Tibial artery (tissue), 4 donors: ENCODE measurements at regions of chr2 and their contacts with region 1.

Region 1: GRCh38 chr2:165700531-165700930 is 93.5 kb downstream of the GALNT3 start:
- DNase-seq: no peak
- H3K4me3 ChIP-seq: no peak overlapping the region
- H3K27ac ChIP-seq: no peak overlapping the region
- H3K4me1 ChIP-seq: peaks cover 0 to 5% (median 4%) of the 10 kb centered on the region in 4 donors
- H3K27me3 ChIP-seq: no peaks in the 10 kb centered on the region
- CTCF ChIP-seq: no peak

Region 2: DNA sequence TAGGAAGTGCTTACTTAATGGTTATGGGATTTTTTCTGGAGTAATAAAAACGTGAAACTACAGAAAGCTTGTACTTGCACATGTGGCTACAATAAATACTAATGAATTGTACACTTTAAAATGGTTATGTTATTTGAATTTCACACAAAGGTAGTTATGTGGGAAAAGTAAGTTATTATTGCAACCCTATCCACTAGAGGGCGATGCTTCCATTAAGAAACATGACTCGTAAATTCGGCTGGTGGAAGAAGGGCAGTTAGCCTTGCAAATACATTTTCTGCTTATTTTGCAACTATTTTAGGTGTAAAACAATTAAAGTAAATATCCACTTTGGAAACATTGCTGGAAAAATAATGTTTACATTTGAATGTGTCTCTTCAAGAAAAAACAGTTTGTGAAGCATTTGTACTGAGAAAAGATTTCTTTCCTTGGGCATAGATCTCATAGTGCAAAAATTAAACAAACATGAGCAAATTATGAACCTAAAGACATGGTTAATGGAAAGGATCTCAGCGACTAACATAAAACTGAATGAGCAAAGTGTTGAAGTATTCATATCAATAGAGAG is 299.2 kb before region 1 on chr2:
- intact Hi-C with region 1: loop called (anchors 5 kb)
- DNase-seq: no peak
- H3K4me3 ChIP-seq: no peak overlapping the region
- H3K27ac ChIP-seq: no peak overlapping the region
- H3K4me1 ChIP-seq: peaks cover 0 to 6% (median 0%) of the 10 kb centered on the region in 4 donors
- H3K27me3 ChIP-seq: no peaks in the 10 kb centered on the region
- CTCF ChIP-seq: peak; percentile 71 to 78

Region 3: DNA sequence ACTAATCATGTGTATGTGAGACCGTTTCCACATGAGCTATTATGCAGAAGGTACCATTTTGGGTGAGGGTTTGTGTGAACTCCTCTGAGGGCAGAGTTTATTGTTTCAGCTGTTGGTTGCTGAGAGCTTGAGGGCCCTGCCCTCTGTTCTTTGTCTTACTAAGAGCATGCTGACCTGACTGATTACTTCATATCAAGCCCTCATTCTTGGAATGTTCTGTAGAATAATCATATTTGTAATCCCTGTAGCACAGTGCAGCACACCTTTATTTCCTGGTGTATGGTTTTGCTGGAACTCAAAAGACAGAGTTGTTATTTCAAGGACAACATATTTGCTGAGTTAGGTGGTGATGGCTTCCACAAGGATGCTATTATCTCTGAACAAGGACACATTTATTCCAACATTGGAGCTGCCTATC is 25.0 kb before region 1 on chr2:
- intact Hi-C with region 1: no loop called
- DNase-seq: no peak
- H3K4me3 ChIP-seq: no peak overlapping the region
- H3K27ac ChIP-seq: no peak overlapping the region
- H3K4me1 ChIP-seq: no peaks in the 10 kb centered on the region
- H3K27me3 ChIP-seq: no peaks in the 10 kb centered on the region
- CTCF ChIP-seq: no peak

Region 4: DNA sequence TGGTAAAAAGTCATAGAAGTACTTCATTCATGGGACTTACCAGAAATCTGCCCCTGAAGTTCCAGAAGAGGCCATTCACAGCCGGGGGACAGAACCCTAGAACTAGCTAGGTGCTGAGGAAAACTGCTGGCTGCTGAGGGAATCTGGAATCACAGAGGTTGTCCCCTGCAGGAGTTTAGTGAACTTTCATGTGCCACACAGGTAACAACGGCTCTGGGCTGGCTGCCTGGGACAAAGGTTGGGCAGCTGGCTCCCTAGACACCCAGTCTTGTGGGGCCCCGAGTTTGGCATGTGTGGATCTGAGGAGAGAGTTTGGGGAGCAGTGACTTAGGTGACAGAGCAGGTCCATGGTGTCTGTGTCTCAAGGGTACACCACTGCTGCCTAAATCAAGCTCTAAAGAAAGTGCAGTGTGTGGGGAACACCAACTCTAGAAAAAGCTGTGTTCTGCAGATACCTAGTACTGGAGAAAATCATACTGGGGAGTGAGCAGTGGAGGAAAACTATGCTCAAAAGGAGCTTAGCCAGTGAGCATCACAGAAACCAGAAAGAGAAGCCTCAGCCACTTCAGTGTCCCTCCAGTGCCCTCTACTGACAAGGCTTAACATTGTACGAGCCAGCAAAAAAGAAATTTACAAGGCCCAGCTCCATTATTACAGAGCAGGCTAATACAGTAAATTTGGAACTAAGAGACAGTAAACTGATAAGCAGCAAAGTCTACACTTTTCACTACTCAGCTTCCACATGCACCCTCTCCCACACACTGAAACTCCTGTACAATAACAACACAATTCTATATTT is 78.3 kb after region 1 on chr2:
- intact Hi-C with region 1: no loop called
- DNase-seq: no peak
- H3K4me3 ChIP-seq: no peak overlapping the region
- H3K27ac ChIP-seq: no peak overlapping the region
- H3K4me1 ChIP-seq: peaks cover 0 to 5% (median 0%) of the 10 kb centered on the region in 4 donors
- H3K27me3 ChIP-seq: no peaks in the 10 kb centered on the region
- CTCF ChIP-seq: no peak